ENCODE measurements at regions of chr11 and their contacts with region 1.

Region 1: GRCh38 chr11:118791111-118791965 is at the start of gene DDX6:
- DNase-seq: peak; percentile 83
- ATAC-seq: peak; percentile 60
- H3K4me3 Mint-ChIP-seq: peak within 1 kb of the TSS; percentile 100
- H3K27ac Mint-ChIP-seq: peak within 1 kb of the TSS; percentile 99
- H3K4me1 Mint-ChIP-seq: peaks cover 47% of the 10 kb centered on the region
- H3K27me3 Mint-ChIP-seq: no peaks in the 10 kb centered on the region
- CTCF ChIP-seq: no peak
- total RNA-seq, gene DDX6: 263 and 297 TPM in 2 replicates

Region 2: GRCh38 chr11:118448294-118448693 is 343.0 kb before region 1 on chr11:
- CTCF ChIA-PET with region 1: no interaction called
- POLR2A ChIA-PET with region 1: no interaction called
- intact Hi-C with region 1: no loop called
- DNase-seq: no peak
- ATAC-seq: peak; percentile 63
- H3K4me3 Mint-ChIP-seq: no peak overlapping the region
- H3K27ac Mint-ChIP-seq: no peak overlapping the region
- H3K4me1 Mint-ChIP-seq: peaks cover 66% of the 10 kb centered on the region
- H3K27me3 Mint-ChIP-seq: no peaks in the 10 kb centered on the region
- CTCF ChIP-seq: no peak

Region 3: GRCh38 chr11:118565051-118565450 is 226.3 kb before region 1 on chr11:
- CTCF ChIA-PET with region 1: no interaction called
- POLR2A ChIA-PET with region 1: no interaction called
- intact Hi-C with region 1: no loop called
- DNase-seq: no peak
- ATAC-seq: no peak
- H3K4me3 Mint-ChIP-seq: peak overlapping the region; percentile 68
- H3K27ac Mint-ChIP-seq: peak overlapping the region; percentile 20
- H3K4me1 Mint-ChIP-seq: peaks cover 10% of the 10 kb centered on the region
- H3K27me3 Mint-ChIP-seq: no peaks in the 10 kb centered on the region
- CTCF ChIP-seq: no peak

Region 4: GRCh38 chr11:118689851-118690552 is 101.3 kb before region 1 on chr11:
- CTCF ChIA-PET with region 1: interaction called, 9 read pairs
- POLR2A ChIA-PET with region 1: interaction called, 12 read pairs
- intact Hi-C with region 1: loop called (anchors 1 kb)
- DNase-seq: peak; percentile 74
- ATAC-seq: peak; percentile 95
- H3K4me3 Mint-ChIP-seq: peak overlapping the region; percentile 79
- H3K27ac Mint-ChIP-seq: peak overlapping the region; percentile 15
- H3K4me1 Mint-ChIP-seq: peaks cover 12% of the 10 kb centered on the region
- H3K27me3 Mint-ChIP-seq: peaks cover 4% of the 10 kb centered on the region
- CTCF ChIP-seq: peak; percentile 55

Region 5: DNA sequence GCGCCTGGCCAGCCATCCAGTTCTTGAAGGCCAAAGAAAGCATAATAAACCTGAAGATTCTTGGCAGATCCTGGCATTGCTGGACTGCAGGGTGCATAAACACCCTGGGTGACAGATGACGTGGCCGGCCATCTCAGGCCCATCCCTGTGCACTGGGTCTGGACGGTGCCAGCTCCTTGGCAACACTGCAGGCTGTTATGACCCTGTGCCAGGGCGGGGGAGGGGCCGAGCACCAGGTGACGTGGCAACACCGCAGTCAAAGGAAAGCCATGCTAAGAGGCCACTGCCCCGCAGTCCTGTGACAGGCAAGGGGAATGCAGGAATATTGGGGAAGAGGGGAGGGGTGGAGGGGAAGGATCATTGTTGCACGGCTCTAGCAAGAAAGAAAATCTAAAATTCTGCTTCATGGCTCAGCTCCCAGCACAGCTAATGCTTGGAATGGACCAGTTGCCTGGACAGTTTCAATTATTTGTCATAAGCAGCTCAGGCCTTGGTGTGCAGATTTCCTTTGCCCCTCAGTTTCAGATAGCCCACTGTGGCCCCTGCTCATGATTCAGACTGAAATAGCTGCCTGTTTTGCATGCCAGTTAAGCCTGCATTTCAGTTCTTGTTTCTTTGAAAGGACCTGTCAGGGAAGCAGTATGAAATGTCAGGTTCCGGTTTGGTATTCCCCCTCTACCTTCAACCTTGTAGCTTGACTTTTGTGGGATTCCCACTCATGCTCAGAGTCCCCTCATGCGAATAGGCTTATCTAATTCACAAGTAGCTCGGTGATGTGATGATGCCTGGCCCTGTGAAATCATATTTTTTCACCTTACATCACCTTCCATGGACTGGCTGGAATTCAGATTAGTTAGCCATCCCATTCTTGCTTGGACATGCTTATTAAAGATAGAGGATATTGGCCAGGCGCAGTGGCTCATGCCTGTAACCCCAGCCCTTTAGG is 29.3 kb after region 1 on chr11:
- CTCF ChIA-PET with region 1: interaction called, 64 read pairs
- POLR2A ChIA-PET with region 1: interaction called, 988 read pairs
- intact Hi-C with region 1: loop called (anchors 1 kb)
- DNase-seq: peak; percentile 51
- ATAC-seq: peak; percentile 85
- H3K4me3 Mint-ChIP-seq: peak overlapping the region; percentile 77
- H3K27ac Mint-ChIP-seq: peak overlapping the region; percentile 97
- H3K4me1 Mint-ChIP-seq: peaks cover 73% of the 10 kb centered on the region
- H3K27me3 Mint-ChIP-seq: no peaks in the 10 kb centered on the region
- CTCF ChIP-seq: no peak

Region 6: DNA sequence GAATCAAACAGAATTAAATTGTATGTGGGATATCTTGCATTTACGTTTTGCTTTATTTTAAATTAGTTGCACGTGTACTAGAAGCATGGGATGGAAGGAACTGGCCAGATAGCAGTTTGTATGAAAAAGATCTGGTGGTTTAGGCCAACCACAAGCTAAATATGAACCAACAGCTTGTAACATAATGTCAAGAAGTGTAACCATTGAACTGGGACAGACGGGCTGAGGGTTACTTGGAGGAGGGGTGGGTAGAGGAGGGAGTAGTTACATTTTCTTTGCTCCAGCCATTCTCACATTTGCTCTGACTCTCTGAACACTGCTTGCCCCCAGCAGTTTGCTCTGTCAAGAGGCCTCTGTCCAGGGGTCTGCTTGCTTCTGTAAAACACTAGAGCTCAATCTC is 60.6 kb after region 1 on chr11:
- CTCF ChIA-PET with region 1: interaction called, 3 read pairs
- POLR2A ChIA-PET with region 1: interaction called, 25 read pairs
- intact Hi-C with region 1: no loop called
- DNase-seq: no peak
- ATAC-seq: peak; percentile 87
- H3K4me3 Mint-ChIP-seq: peak overlapping the region; percentile 55
- H3K27ac Mint-ChIP-seq: peak overlapping the region; percentile 64
- H3K4me1 Mint-ChIP-seq: peaks cover 42% of the 10 kb centered on the region
- H3K27me3 Mint-ChIP-seq: no peaks in the 10 kb centered on the region
- CTCF ChIP-seq: no peak

Region 7: GRCh38 chr11:118878163-118878563 is 86.8 kb after region 1 on chr11:
- CTCF ChIA-PET with region 1: interaction called, 13 read pairs
- POLR2A ChIA-PET with region 1: interaction called, 266 read pairs
- intact Hi-C with region 1: loop called (anchors 1 kb)
- DNase-seq: no peak
- ATAC-seq: no peak
- H3K4me3 Mint-ChIP-seq: no peak overlapping the region
- H3K27ac Mint-ChIP-seq: peak overlapping the region; percentile 89
- H3K4me1 Mint-ChIP-seq: peaks cover 89% of the 10 kb centered on the region
- H3K27me3 Mint-ChIP-seq: no peaks in the 10 kb centered on the region
- CTCF ChIP-seq: no peak

Region 8: GRCh38 chr11:118907051-118908042 is 116.0 kb after region 1 on chr11:
- CTCF ChIA-PET with region 1: interaction called, 4 read pairs
- POLR2A ChIA-PET with region 1: interaction called, 57 read pairs
- intact Hi-C with region 1: no loop called
- DNase-seq: peak; percentile 77
- ATAC-seq: peak; percentile 85
- H3K4me3 Mint-ChIP-seq: no peak overlapping the region
- H3K27ac Mint-ChIP-seq: peak overlapping the region; percentile 53
- H3K4me1 Mint-ChIP-seq: peaks cover 39% of the 10 kb centered on the region
- H3K27me3 Mint-ChIP-seq: no peaks in the 10 kb centered on the region
- CTCF ChIP-seq: peak; percentile 64

Region 9: DNA sequence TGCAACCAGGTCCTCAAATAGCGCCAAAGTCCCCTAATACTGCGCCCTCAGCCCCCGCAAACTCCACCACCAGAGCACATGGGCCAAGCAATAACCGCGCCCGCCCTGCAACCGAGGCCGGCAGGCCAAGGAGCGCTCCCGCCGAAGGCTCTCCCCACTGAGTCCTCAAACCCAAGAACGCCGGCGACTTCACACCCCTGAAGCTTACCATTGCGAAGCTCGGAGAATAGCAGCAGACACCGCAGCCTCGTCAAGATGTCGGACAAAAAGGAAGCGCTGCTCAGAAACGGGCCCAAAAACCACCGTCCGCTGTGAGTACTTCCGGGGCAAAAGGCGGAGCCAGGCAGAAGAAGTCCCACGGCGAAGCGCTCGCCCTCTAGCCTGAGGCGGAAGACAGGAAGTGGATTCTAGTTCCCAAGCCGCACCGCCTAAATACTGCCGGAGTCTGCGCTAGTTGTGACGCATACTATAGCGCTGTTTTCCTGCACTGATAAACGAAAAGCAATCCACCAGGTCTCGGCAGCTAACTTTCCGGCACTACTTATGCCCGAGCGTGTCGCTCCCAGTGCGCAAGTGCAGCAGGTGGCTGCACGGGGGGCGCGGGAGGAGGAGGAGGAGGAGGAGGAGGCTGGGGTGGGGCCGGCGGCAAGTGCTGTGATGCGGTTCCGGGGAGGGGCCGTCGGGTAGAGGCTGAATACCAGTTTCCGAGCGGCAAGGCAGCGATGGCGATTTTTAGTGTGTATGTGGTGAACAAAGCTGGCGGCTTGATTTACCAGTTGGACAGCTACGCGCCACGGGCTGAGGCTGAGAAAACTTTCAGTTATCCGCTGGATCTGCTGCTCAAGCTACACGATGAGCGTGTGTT is 227.0 kb after region 1 on chr11 and contains the starts of genes RPS25 and TRAPPC4:
- CTCF ChIA-PET with region 1: no interaction called
- POLR2A ChIA-PET with region 1: interaction called, 5 read pairs
- intact Hi-C with region 1: loop called (anchors 5 kb)
- DNase-seq: peak; percentile 90
- ATAC-seq: peak; percentile 87
- H3K4me3 Mint-ChIP-seq: peak within 1 kb of the TSS; percentile 99
- H3K27ac Mint-ChIP-seq: peak within 1 kb of the TSS; percentile 100
- H3K4me1 Mint-ChIP-seq: peaks cover 54% of the 10 kb centered on the region
- H3K27me3 Mint-ChIP-seq: no peaks in the 10 kb centered on the region
- CTCF ChIP-seq: no peak
- total RNA-seq, gene RPS25: 2,191 and 2,534 TPM in 2 replicates
- total RNA-seq, gene TRAPPC4: 56.8 and 60.1 TPM in 2 replicates